GM12878 (cell line): ENCODE measurements at regions of chr14 and their contacts with region 1.

Region 1: GRCh38 chr14:58788655-58789505 is 151.1 kb downstream of the DACT1 start:
- DNase-seq: no peak
- ATAC-seq: no peak
- H3K4me3 ChIP-seq: no peak overlapping the region
- H3K27ac ChIP-seq: no peak overlapping the region
- H3K4me1 ChIP-seq: no peaks in the 10 kb centered on the region
- H3K27me3 ChIP-seq: no peaks in the 10 kb centered on the region; a peak in 1 of 4 replicates
- CTCF ChIP-seq: no peak
- EP300 ChIP-seq: no peak
- POLR2A ChIP-seq: no peak
- RAD21 ChIP-seq: no peak

Region 2: DNA sequence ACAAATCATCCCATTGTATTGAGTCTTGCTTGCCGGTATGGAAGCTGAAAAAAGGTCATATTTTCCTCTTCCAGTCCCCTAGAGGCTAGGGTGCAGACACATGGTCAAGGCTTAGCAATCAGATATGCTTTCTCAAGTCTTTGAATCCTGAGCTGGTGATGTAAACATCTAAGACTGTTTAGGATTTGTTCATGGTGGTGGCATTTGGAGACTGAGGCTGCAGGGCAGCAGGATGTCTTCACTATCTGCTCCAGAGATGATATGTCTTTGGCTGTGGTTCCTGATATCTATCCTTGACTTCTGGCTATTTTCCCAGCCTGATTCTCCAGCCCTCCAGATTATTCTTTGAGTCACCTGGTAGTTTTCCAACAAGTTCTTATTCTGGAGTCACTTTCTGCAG is 201.6 kb before region 1 on chr14:
- CTCF ChIA-PET with region 1: no interaction called
- POLR2A ChIA-PET with region 1: no interaction called
- RAD21 ChIA-PET with region 1: no interaction called
- SMC1A ChIA-PET with region 1: no interaction called
- in situ Hi-C with region 1: no loop called
- intact Hi-C with region 1: no loop called
- DNase-seq: no peak
- ATAC-seq: no peak
- H3K4me3 ChIP-seq: no peak overlapping the region
- H3K27ac ChIP-seq: no peak overlapping the region
- H3K4me1 ChIP-seq: no peaks in the 10 kb centered on the region
- H3K27me3 ChIP-seq: no peaks in the 10 kb centered on the region
- CTCF ChIP-seq: no peak
- EP300 ChIP-seq: no peak
- POLR2A ChIP-seq: no peak
- RAD21 ChIP-seq: no peak

Region 3: GRCh38 chr14:58768977-58769643 is 19.8 kb before region 1 on chr14:
- CTCF ChIA-PET with region 1: interaction called, 3 read pairs
- POLR2A ChIA-PET with region 1: no interaction called
- RAD21 ChIA-PET with region 1: interaction called, 4 read pairs
- SMC1A ChIA-PET with region 1: interaction called, 14 read pairs
- in situ Hi-C with region 1: no loop called
- intact Hi-C with region 1: no loop called
- DNase-seq: no peak
- ATAC-seq: no peak
- H3K4me3 ChIP-seq: no peak overlapping the region
- H3K27ac ChIP-seq: no peak overlapping the region
- H3K4me1 ChIP-seq: no peaks in the 10 kb centered on the region
- H3K27me3 ChIP-seq: no peaks in the 10 kb centered on the region
- CTCF ChIP-seq: no peak
- EP300 ChIP-seq: no peak
- POLR2A ChIP-seq: no peak
- RAD21 ChIP-seq: no peak

Region 4: GRCh38 chr14:58846682-58847465 is 58.0 kb after region 1 on chr14:
- CTCF ChIA-PET with region 1: no interaction called
- POLR2A ChIA-PET with region 1: no interaction called
- RAD21 ChIA-PET with region 1: no interaction called
- SMC1A ChIA-PET with region 1: no interaction called
- in situ Hi-C with region 1: no loop called
- intact Hi-C with region 1: no loop called
- DNase-seq: no peak
- ATAC-seq: peak; percentile 63
- H3K4me3 ChIP-seq: no peak overlapping the region
- H3K27ac ChIP-seq: no peak overlapping the region
- H3K4me1 ChIP-seq: no peaks in the 10 kb centered on the region
- H3K27me3 ChIP-seq: no peaks in the 10 kb centered on the region
- CTCF ChIP-seq: 0 out of 6 replicates have a peak, but pooled peaks of 1 of the 3 experiments have one; percentile 3
- EP300 ChIP-seq: no peak
- POLR2A ChIP-seq: no peak
- RAD21 ChIP-seq: no peak